ENCODE measurements at regions of chr17 and their contacts with region 1.

Region 1: GRCh38 chr17:58703137-58703972 is 11.0 kb downstream of the RAD51C start:
- DNase-seq: peak; percentile 59
- H3K4me3 ChIP-seq: no peak overlapping the region
- H3K27ac ChIP-seq: no peak overlapping the region
- H3K4me1 ChIP-seq: 0 out of 2 replicates have a peak, but pooled peaks cover 3% of the 10 kb centered on the region
- H3K27me3 ChIP-seq: no peaks in the 10 kb centered on the region

Region 2: DNA sequence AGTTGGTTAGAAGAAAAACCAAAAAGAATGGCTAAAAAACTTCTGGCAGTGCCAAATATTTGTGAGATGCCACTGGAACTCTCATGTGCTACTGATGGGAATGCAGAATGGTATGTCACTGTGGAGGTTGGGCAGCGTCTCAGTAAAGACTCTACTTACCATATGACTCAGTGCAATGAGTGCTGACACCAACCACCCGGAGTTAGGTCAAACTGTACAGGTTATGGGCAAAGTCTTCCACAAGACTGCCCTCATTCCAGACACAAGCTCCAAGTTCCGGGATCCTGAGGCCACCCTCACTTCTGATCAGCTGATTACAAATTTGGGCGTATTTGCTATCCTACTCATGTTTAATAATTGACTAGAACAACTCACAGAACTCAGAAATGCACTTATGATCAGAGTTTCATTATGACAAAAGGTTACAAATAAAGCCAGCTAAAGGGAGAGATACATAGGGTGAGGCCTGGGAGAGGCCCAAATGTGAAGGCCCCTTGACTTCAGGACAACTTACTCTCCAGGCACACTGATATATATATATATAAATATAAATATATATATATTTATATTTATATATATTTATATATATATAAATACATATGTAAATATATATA is 288.5 kb after region 1 on chr17:
- in situ Hi-C with region 1: loop called (anchors 10 kb)
- DNase-seq: peak; percentile 74
- H3K4me3 ChIP-seq: no peak overlapping the region
- H3K27ac ChIP-seq: peak overlapping the region; percentile 44
- H3K4me1 ChIP-seq: peaks cover 19% of the 10 kb centered on the region
- H3K27me3 ChIP-seq: no peaks in the 10 kb centered on the region